Left cardiac atrium (tissue), 4 donors: ENCODE measurements at regions of chr17 and their contacts with region 1.

Region 1: GRCh38 chr17:2094891-2095535 is 40.1 kb downstream of the HIC1 start:
- DNase-seq: peak; percentile 71
- ATAC-seq: peak; percentile 83 to 88

Region 2: DNA sequence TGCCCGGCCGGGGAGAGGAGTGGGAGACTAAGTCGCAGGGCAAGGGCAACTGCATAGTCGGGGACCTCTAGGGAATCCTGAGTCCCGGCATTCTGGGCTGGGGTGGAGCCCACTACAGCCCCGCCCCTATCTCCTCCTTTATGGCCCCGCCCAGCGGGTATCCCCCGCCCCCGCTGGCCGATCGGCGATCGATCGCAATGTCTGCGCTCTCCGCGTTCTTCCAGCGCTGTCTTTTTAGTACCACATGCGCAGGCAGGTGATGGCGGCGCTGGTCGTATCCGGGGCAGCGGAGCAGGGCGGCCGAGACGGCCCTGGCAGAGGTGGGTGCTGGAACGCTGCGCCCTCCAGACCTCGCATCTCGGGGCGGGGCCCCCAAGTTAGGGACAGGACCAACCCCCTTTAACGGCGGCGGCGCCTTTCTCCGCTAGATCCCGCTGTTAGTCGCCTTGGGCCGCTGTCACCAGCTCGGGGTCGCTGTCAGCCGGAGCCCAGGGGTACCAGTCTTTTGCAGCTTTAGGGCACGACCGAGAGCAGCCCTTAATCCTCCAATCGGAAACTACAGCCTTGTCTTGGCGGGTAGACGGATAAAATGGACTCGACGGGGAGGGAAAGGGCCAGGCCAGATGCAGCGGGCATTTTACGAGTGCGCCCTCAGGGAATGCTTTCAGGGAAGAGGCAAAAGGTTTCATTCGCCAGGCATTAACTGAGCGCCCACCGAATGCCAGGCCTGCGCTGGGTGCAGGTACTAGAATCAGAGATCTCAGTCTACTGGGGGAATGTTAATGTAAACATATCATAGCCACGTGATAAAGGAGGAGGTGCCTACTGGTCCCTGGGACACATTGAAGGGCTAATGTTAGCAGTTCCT is 64.9 kb before region 1 on chr17 and contains the start of gene DPH1:
- intact Hi-C with region 1: no loop called
- DNase-seq: peak; percentile 92
- ATAC-seq: peak; percentile 85 to 90
- total RNA-seq, gene DPH1: 21.2 to 30.8 TPM

Region 3: DNA sequence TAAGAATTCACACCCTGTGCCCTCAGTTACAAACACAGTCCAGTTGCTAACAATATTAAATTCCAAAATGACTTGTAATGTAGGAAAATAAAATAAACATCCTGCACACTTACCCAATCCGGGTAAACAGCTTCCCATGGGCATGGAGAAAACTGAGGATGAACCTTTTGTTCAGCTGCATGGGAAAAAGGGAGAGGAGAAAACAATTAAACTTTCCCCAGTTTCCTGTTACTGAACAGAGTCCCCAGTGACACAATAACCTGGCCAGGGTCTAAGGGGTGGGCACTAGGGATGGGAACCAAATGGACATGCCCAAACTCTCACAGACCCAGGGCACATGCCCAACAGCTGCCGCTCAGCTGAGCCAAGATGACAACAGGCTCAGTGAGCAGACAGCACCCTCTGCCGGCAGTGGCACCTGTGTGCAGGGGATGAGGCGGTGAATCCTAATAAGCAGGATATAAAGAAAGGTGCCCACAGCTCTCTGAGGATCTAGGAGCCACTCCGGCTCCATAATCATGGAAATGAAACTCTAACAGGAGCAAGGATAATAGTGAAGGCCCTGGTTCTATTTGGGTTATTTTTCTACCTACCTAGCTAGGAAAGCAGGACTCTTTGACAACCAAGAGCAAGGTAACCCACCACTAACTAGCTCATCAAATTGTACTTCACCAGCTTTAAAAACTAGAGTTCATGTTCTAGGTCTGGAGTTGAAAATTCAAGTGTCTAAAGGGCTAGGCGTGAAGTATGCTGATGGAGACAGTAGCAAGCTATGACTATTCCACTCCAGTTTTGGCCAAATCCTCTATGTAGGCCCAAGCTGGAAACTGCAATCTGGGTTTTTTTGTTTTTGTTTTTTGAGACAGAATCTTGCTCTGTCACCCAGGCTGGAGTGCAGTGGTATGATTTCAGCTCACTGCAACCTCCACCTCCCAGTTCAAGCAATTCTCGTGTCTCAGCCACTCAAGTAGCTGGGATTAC is 149.8 kb after region 1 on chr17:
- intact Hi-C with region 1: loop called (anchors 2 to 10 kb)
- DNase-seq: peak; percentile 90
- ATAC-seq: peak; percentile 90 to 95